Calu3 (cell line): ENCODE measurements at regions of chr17 and their contacts with region 1.

Region 1: DNA sequence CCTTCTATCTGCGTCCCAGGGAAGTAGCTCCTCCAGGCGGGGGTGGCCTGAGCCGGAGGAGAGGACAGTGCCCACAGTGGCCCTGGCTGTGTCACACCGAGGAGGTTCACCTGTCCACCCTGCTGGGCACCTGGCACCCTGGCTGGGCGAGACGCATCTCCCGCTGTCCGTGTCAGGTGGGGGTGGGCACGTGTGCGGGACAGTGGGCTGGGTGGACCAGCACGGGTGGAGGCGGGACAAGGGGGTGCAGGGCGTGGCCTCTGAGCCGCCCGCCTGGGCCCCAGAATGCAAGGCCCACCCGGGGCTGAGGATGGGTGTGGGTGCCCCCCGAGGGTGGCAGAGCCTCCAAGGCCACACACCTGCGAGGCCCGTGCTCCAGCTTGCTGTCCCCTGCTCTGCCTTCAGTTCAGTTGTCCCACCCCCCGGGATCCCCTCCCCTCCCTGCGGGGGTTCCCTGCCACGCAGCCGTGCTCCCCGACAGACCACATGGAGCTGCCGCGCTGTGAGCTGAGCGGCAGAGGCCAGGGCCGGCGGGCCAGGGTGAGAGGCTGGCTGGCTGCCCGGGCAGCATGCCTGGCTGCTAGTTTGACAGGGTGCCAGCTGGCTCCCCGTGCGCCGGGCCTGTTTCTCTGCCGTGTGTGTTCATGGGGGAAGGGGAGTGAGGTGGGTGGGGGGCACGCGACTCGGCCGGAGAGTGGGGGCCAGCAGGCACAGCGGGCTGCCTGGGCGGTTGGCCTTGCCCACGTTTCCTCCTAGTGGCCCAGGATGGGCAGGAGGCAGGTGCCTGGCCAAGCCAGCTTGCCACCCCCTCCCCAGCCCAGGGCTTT is 33.9 kb downstream of the BAHCC1 start:
- DNase-seq: peak; percentile 88
- H3K4me3 Mint-ChIP-seq: no peak overlapping the region
- H3K27ac Mint-ChIP-seq: no peak overlapping the region
- H3K4me1 Mint-ChIP-seq: no peaks in the 10 kb centered on the region
- H3K27me3 Mint-ChIP-seq: peaks cover 30% of the 10 kb centered on the region
- CTCF ChIP-seq: no peak

Region 2: GRCh38 chr17:81315885-81316391 is 113.2 kb before region 1 on chr17:
- CTCF ChIA-PET with region 1: interaction called, 12 read pairs
- intact Hi-C with region 1: no loop called
- DNase-seq: no peak
- H3K4me3 Mint-ChIP-seq: no peak overlapping the region
- H3K27ac Mint-ChIP-seq: no peak overlapping the region
- H3K4me1 Mint-ChIP-seq: no peaks in the 10 kb centered on the region
- H3K27me3 Mint-ChIP-seq: peaks cover 22% of the 10 kb centered on the region
- CTCF ChIP-seq: no peak

Region 3: GRCh38 chr17:81417049-81417878 is 11.9 kb before region 1 on chr17:
- CTCF ChIA-PET with region 1: no interaction called
- intact Hi-C with region 1: no loop called
- DNase-seq: no peak
- H3K4me3 Mint-ChIP-seq: no peak overlapping the region
- H3K27ac Mint-ChIP-seq: no peak overlapping the region
- H3K4me1 Mint-ChIP-seq: no peaks in the 10 kb centered on the region
- H3K27me3 Mint-ChIP-seq: peaks cover 14% of the 10 kb centered on the region
- CTCF ChIP-seq: no peak

Region 4: DNA sequence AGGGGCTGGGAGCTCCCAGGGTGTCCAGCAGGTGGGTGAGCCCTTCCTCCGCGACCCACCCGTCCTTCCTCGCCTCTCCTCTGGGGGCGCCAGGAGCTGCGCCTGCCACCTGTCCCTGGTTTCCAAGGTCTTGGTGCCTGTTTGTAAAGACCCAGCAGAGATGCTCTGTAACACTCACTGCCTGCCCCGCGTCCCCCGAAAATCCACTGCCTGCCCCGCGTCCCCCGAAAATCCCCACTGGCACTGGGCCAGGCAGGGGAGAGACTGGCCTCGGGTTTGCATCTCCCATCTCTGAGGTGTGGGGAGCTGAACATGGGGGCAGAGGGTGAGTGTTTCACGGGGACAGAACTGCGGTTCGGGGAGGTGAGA is 11.7 kb after region 1 on chr17:
- CTCF ChIA-PET with region 1: interaction called, 15 read pairs
- intact Hi-C with region 1: no loop called
- DNase-seq: peak; percentile 76
- H3K4me3 Mint-ChIP-seq: no peak overlapping the region
- H3K27ac Mint-ChIP-seq: no peak overlapping the region
- H3K4me1 Mint-ChIP-seq: no peaks in the 10 kb centered on the region
- H3K27me3 Mint-ChIP-seq: peaks cover 30% of the 10 kb centered on the region
- CTCF ChIP-seq: peak; percentile 85